Heart left ventricle (tissue), 16 donors: ENCODE measurements at regions of chr16 and their contacts with region 1.

Region 1: DNA sequence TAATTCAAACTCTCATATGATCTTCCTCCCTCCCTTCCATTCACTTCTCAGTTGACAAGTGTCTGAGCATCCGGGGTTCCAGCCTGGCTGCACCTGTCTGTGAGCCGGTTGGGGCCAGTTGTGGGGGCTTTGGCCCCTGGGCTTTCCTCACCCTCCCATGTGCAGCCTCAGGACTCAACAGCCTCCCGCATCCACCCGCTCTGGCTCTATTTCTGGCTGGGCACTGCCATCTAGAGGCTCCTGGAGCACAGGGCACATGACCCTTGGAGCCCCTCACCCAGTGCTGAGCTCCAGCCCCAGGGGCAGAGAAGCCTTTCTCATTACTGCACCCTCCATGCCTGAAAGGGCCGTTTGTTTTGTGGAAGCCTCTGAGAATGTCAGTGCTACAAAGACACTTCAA is 43.3 kb downstream of the HAPSTR1 start:
- DNase-seq: peak; percentile 26 to 75 (median 50)
- ATAC-seq: peak in 3 of 4 donors; percentile 63 to 72 (median 70)
- H3K4me3 ChIP-seq: no peak overlapping the region
- H3K27ac ChIP-seq: no peak overlapping the region
- H3K4me1 ChIP-seq: peaks cover 0 to 21% (median 6%) of the 10 kb centered on the region in 12 donors
- H3K27me3 ChIP-seq: no peaks in the 10 kb centered on the region
- CTCF ChIP-seq: peak; percentile 12 to 60 (median 47)
- POLR2A ChIP-seq: no peak

Region 2: DNA sequence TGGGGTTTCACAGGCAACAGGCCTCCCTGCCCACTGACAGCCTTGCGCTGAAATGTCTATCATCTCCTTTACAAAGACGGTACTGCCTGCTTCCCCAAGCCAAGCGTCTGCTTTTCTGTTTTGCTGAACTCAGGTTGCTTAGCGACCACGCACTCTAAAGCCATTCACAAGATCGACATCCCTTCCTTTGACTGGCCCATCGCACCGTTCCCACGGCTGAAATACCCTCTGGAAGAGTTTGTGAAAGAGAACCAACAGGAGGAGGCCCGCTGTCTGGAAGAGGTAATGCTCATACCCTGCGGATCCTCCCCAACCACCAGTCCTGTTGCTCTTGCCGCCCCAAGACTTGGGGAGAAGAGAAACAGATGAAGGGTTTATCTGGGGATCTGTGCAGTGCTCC is 366.0 kb before region 1 on chr16:
- intact Hi-C with region 1: no loop called
- DNase-seq: no peak
- ATAC-seq: no peak
- H3K4me3 ChIP-seq: no peak overlapping the region
- H3K27ac ChIP-seq: no peak overlapping the region
- H3K4me1 ChIP-seq: no peaks in the 10 kb centered on the region
- H3K27me3 ChIP-seq: no peaks in the 10 kb centered on the region
- CTCF ChIP-seq: no peak
- POLR2A ChIP-seq: no peak

Region 3: DNA sequence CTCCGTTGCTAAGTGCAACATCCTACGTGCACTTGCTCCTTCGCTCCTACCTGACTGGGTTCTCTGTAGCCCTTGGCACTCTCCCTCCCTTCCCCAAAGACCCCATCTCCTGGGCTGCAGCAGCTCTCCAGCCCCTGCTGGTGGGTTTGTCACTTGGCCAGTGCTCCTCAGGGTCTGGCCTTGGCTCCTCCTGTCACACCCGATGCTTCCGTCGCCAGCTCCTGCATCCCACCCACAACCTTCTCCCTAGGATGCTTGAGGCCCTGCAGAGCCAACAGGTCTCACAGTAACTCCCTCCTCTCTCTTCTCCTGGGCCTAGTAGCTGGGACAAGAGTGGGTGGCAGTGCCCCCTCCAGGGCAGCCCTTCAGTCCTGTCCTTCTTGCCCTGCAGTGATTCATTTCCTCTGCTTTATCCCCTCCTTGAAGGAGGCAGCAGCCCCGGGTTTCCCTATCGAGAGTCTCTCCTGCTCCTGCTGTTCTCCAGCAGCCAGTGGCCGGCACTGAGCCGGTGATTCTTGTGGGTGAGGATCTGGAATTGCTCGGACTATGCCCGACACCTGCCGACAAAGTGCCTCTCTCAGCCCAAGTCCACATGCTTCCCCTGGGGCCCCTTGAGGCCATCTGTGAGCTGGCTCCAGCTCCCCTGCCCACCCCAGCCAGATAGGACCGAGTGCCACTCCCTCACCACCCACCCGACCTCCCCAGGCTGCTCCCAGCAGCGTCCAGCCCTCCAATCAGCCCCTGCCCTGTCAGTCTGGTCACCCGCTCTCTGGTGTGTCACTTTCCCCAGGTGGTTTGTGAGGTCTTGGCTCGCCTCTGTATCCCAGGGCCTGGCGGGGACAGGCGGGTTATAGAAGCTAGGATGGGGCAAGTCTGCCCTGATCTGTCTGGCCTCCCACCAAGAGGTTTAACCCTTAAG is 248.8 kb before region 1 on chr16:
- intact Hi-C with region 1: loop called in 1 of 10 experiments (anchors 10 kb)
- DNase-seq: no peak
- ATAC-seq: peak in 3 of 4 donors; percentile 18 to 23 (median 21)
- H3K4me3 ChIP-seq: no peak overlapping the region
- H3K27ac ChIP-seq: no peak overlapping the region
- H3K4me1 ChIP-seq: peaks cover 0 to 25% (median 17%) of the 10 kb centered on the region in 12 donors
- H3K27me3 ChIP-seq: peaks cover 0 to 5% (median 0%) of the 10 kb centered on the region in 9 donors
- CTCF ChIP-seq: no peak
- POLR2A ChIP-seq: no peak

Region 4: DNA sequence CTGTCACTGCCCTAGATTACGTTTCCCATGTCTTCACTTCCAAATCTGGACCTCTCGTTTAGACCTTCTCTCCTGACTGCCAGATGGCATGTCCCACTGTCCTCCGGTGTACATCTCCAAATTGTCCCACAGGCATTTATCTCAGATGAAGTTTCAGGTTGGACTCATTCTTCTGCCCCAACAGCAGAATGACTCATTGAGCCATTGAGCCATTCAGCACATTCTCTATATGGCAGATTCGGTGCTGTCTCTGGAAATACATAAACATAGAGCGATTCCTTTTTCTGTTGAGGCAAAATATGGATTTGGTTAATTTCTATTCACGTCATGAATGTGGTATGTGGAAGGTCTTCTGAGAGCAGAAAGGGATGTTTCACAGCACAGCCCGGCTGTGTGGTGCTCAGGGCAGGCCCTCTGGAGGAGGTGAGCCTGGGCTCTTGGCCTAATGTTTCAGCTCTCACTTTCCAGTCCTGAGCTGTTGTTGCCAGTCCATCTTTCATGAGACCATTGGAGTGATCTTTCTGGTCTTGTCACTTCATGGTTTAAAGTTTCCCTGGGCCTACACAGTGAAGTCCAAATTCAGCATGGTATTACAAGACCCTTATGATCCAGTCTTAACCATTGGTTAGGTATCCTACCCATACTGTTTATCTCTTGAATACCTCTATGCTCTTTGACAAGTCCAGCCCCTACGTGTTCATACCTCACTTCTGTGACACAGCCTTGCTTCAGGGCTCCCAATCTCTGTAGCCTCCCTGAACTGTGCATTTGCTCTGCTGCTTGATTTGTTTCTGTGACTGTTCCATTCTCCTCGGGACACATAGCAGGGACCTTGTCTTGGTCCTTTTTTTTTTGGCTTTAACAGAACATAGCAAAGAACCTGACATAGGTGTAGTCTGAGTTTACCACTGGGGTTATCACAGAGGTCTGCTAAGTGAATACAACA is 27.4 kb before region 1 on chr16:
- intact Hi-C with region 1: no loop called
- DNase-seq: no peak
- ATAC-seq: peak in 2 of 4 donors; percentile 10 to 16
- H3K4me3 ChIP-seq: no peak overlapping the region
- H3K27ac ChIP-seq: no peak overlapping the region
- H3K4me1 ChIP-seq: peaks cover 20 to 100% (median 97%) of the 10 kb centered on the region in 12 donors
- H3K27me3 ChIP-seq: no peaks in the 10 kb centered on the region
- CTCF ChIP-seq: no peak
- POLR2A ChIP-seq: no peak